WTC11 (cell line): ENCODE measurements at regions of chr2 and their contacts with region 1.

Region 1: DNA sequence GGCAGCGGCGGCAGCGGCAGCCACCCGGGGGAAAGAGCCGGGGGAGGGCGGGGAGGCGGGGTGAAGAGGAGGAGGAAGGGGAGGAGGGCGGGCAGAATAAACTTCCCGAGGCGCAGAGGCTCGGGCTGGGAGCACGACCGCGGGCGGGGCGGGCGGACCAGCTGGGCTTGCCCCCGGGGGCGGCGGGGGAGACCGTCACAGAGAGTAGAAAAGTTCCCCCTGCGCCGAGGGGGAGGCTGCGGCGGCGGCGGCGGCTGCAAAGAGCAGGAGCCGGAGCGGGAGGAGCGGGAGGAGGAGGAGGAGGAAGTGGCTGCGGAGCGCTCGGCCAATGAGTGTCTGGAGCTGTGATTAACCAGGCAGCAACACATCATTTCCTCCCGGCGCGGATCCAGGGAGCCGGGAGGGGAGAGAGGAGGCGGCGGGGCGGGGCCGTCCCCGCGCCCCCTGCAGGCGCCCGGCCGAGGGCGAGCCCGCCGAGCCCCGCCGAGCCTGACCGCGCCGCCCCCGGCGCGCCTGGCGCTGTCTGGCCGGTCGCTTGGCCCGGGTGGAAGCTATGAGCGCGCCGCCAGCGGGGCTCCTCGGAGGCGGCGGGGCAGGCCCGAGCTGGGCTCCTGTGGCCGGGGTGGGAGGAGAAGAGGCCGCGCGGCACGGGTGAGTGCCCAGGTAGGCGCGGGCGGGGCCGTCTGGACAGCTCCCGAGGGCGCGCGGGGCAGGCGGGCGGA is at the start of gene ACVR1:
- DNase-seq: peak; percentile 87
- ATAC-seq: peak; percentile 90
- H3K4me3 Mint-ChIP-seq: peak within 1 kb of the TSS; percentile 92
- H3K27ac Mint-ChIP-seq: peak within 1 kb of the TSS; percentile 87
- H3K4me1 Mint-ChIP-seq: peaks cover 53% of the 10 kb centered on the region
- H3K27me3 Mint-ChIP-seq: no peaks in the 10 kb centered on the region; the same call in 1 of the 2 replicates
- CTCF ChIP-seq: no peak
- total RNA-seq, gene ACVR1: 16.8 to 20.2 TPM (median 19.2 TPM) in 3 replicates

Region 2: DNA sequence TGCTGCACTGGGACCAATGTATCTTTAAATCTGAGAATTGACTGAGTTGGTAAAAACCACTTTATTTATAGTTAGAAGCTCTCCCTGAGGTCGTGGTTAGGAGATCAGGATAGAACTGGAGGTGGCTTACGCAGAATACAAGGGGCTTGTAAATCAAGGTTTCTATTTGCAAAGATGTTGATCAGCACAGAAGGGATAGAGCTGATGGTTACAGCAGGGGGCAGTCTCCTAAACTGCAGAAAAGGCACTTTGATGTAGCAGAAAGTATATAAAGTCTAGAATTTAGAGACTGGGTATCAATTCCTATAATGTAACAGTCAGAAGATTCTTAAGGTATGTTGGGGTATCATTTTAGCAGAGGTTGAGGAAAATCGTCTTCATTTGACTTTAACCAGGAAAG is 25.1 kb after region 1 on chr2:
- CTCF ChIA-PET with region 1: interaction called, 11 read pairs
- POLR2A ChIA-PET with region 1: no interaction called
- DNase-seq: no peak
- ATAC-seq: peak; percentile 76
- H3K4me3 Mint-ChIP-seq: no peak overlapping the region
- H3K27ac Mint-ChIP-seq: no peak overlapping the region
- H3K4me1 Mint-ChIP-seq: peaks cover 24% of the 10 kb centered on the region
- H3K27me3 Mint-ChIP-seq: peaks cover 16% of the 10 kb centered on the region
- CTCF ChIP-seq: no peak

Region 3: GRCh38 chr2:158006961-158007719 is 130.9 kb after region 1 on chr2:
- CTCF ChIA-PET with region 1: interaction called, 11 read pairs
- POLR2A ChIA-PET with region 1: no interaction called
- DNase-seq: peak; percentile 32
- ATAC-seq: peak; percentile 54
- H3K4me3 Mint-ChIP-seq: no peak overlapping the region
- H3K27ac Mint-ChIP-seq: no peak overlapping the region
- H3K4me1 Mint-ChIP-seq: peaks cover 39% of the 10 kb centered on the region
- H3K27me3 Mint-ChIP-seq: peaks cover 29% of the 10 kb centered on the region
- CTCF ChIP-seq: no peak